ENCODE measurements at regions of chr9 and their contacts with region 1.

Region 1: DNA sequence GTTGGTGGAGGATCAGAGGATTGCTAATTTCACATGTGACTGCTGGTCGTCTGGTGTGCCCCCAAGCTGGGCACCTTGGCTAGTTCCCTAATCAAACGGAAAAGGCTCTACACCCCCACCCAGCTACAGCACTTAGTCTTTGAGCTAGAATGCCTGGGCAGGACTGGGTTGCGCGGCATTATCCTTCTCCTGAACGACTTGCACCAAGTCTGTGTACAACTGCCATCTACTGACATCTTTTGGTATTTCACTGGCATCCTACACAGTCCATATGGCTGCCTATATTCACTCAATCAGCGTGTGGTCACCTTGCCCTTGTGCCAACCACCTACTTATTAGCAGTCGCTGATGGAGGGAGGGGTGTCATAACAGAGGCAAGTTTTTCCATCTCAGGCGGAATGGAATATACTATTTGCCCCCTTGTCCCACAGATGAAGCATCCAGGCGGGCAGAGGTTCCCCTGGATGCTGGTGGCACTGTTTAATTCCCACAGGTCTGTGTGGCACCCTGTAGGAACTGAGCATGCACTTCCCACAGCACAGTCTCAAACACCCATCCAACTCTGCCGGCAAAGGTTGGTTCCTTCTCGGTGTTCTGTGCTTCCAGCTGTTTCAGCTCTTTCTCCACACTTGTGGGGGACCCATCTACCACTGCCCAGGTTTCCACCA is 150.1 kb downstream of the OSTF1 start:
- DNase-seq: peak; percentile 62
- ATAC-seq: peak; percentile 99
- H3K4me3 ChIP-seq: no peak overlapping the region
- H3K27ac ChIP-seq: no peak overlapping the region
- H3K4me1 ChIP-seq: no peaks in the 10 kb centered on the region
- H3K27me3 ChIP-seq: no peaks in the 10 kb centered on the region
- CTCF ChIP-seq: peak; percentile 53 to 68 (median 66); a peak in 5 of 6 replicates
- POLR2A ChIP-seq: no peak
- RAD21 ChIP-seq: peak; percentile 70

Region 2: DNA sequence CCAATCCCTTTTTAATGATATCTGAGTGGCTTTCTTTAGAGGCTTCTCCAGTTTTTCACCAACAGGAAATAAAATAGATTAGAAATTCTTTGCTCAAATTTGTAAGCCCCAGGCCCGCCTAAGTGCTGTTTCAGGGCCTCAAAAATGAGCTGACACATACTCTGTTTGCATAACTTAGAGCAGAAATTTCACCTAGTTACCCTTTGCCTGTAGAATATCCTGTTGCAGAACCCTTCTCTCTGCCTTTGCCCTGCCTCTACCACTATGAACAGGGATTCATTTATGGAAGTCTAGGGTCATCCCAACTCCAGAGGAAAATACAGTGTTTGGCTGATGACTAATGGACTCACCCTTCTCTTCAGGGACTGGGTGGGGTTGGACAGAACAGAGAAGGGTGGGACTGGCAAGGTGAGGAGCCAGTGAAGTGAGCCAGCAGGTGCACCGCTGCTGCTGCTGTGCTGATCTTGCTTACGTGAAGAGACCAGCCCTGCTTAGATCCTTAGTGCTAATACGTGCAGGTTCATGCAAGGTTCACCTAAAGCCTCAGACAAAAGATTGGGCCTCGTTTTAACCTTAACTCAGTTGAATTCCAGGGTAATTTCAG is 127.3 kb before region 1 on chr9:
- CTCF ChIA-PET with region 1: no interaction called
- POLR2A ChIA-PET with region 1: no interaction called
- RAD21 ChIA-PET with region 1: no interaction called
- intact Hi-C with region 1: no loop called
- DNase-seq: peak; percentile 10
- ATAC-seq: peak; percentile 67
- H3K4me3 ChIP-seq: no peak overlapping the region
- H3K27ac ChIP-seq: no peak overlapping the region
- H3K4me1 ChIP-seq: peaks cover 3 to 11% of the 10 kb centered on the region in 2 experiments; a peak in 2 of 4 replicates
- H3K27me3 ChIP-seq: no peaks in the 10 kb centered on the region
- CTCF ChIP-seq: no peak
- POLR2A ChIP-seq: no peak
- RAD21 ChIP-seq: no peak

Region 3: DNA sequence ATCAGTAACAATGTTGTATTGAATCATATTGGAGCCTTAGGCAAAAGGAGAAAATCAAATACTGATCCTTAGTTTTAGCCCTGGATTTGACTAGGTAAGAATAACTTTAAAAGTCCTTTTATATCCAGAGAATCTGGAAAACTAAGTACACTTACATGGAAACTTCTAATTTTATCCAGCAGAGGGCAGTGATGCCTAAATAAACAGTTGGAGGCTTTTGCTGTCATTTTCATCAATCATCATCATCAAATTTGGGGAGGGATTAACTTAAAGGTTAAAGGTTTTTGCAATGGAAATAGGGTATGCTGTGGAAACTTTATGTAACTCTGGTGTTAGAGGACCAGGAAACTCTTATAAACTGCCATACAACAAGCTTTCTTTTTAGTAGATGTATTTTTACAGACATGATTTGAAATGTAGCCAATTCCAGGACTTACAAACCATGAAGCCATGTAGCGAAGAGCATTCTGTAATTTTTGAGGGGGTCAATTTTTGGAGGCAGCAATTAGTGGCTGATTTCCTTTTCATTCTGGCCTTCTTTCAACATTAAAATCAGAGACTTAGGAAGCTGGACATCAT is 37.5 kb before region 1 on chr9:
- CTCF ChIA-PET with region 1: interaction called, 9 read pairs
- POLR2A ChIA-PET with region 1: no interaction called
- RAD21 ChIA-PET with region 1: no interaction called
- intact Hi-C with region 1: loop called (anchors 1 kb)
- DNase-seq: peak; percentile 61
- ATAC-seq: peak; percentile 55
- H3K4me3 ChIP-seq: no peak overlapping the region
- H3K27ac ChIP-seq: no peak overlapping the region
- H3K4me1 ChIP-seq: no peaks in the 10 kb centered on the region
- H3K27me3 ChIP-seq: no peaks in the 10 kb centered on the region; the same call in none of the 2 replicates
- CTCF ChIP-seq: peak; percentile 45 to 76 (median 76); a peak in 5 of 6 replicates
- POLR2A ChIP-seq: no peak
- RAD21 ChIP-seq: peak; percentile 78

Region 4: GRCh38 chr9:75282047-75282446 is 43.6 kb after region 1 on chr9:
- CTCF ChIA-PET with region 1: no interaction called
- POLR2A ChIA-PET with region 1: no interaction called
- RAD21 ChIA-PET with region 1: no interaction called
- intact Hi-C with region 1: no loop called
- DNase-seq: no peak
- ATAC-seq: no peak
- H3K4me3 ChIP-seq: no peak overlapping the region
- H3K27ac ChIP-seq: no peak overlapping the region
- H3K4me1 ChIP-seq: no peaks in the 10 kb centered on the region
- H3K27me3 ChIP-seq: peaks cover 8% of the 10 kb centered on the region; the same call in 1 of the 2 replicates
- CTCF ChIP-seq: no peak
- POLR2A ChIP-seq: no peak
- RAD21 ChIP-seq: no peak

Measured in HCT116 (cell line).